ENCODE measurements at regions of chr17 and their contacts with region 1.

Region 1: GRCh38 chr17:81512560-81513371 is at the start of gene ACTG1:
- DNase-seq: peak; percentile 97
- total RNA-seq, gene ACTG1: 634 TPM

Region 2: GRCh38 chr17:81552244-81553017 is 39.7 kb after region 1 on chr17 and contains the start of gene FAAP100:
- intact Hi-C with region 1: loop called (anchors 1 kb)
- DNase-seq: peak; percentile 90
- total RNA-seq, gene FAAP100: 13.6 TPM